Naive thymus-derived CD4-positive, alpha-beta T cell (primary cell): ENCODE measurements at regions of chr10 and their contacts with region 1.

Region 1: DNA sequence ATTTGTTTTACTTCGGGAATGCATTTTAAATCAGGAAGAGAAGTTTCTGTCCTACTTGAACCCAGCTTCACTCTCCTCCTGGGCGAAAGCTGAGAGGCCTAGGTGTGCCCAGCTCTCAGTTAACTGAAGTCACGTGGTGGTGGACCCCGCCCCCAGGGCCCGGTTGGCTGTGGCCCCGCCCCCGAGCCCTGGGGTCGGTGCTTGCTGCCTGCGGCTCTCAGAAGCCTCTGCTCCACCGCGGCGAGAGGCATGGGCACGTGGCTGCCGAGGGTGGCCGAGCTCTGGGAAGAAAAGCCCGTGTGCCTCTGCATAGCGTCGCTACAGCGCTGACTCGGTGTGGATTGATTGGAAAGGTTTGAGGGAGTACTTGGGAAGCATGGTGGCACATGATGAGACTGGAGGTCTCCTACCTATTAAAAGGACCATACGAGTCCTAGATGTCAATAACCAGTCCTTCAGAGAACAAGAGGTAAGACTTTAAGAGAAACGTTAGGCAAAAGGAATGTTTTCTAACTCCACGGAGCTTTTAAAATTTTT is 34.1 kb downstream of the NET1 start:
- DNase-seq: peak; percentile 77 to 88 (median 86)
- ATAC-seq: peak; percentile 93
- H3K4me3 ChIP-seq: peak overlapping the region; percentile 79
- H3K4me3 Mint-ChIP-seq: peak overlapping the region; percentile 92 to 100 (median 96)
- H3K27ac ChIP-seq: peak overlapping the region; percentile 78
- H3K27ac Mint-ChIP-seq: peak overlapping the region; percentile 82 to 97 (median 92)
- H3K4me1 ChIP-seq: peaks cover 0 to 24% of the 10 kb centered on the region in 2 donors
- H3K4me1 Mint-ChIP-seq: peaks cover 16 to 78% (median 62%) of the 10 kb centered on the region in 7 donors
- H3K27me3 ChIP-seq: no peaks in the 10 kb centered on the region
- H3K27me3 Mint-ChIP-seq: no peaks in the 10 kb centered on the region

Region 2: DNA sequence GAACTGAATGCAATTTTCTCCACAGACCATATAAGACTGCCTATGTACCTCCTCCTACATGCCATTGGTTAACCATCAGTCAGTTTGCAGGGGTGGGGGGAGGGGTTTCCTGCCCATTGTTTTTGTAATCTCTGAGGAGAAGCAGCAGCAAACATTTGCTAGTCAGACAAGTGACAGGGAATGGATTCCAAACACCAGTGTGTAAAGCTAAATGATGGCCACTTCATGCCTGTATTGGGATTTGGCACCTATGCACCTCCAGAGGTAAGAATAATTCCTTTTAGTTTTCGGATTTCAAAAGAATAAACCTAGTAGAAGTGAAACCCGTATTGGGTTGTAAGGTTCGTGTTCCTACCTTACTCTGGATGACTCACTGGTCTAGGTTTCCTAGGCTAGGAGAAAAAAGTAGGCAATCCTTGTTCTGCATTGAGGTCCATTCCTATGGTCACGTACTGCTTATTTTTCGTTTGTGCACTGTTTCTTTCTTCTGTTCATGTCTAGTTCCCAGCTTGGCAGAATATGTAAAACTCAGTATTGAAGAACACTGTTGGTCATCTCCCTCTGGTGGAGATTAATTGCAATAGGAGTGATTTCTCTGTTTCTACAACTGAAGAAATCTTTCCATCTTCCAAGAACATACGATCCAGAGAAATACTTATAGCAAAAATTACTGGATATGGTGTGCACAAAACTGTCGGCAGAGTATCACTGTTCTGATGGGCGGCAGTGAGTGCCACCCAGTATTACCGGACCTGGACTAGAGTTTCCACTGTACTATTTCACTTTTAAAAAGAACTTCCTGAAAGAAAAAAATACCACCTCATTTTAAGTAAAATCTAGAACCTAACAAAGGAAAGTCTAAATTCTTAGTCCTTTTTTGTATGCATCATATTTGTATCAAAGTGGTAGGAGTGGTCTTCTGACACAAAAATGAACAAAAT is 351.9 kb before region 1 on chr10 and contains the start of gene AKR1C3:
- CTCF ChIA-PET with region 1: no interaction called
- POLR2A ChIA-PET with region 1: no interaction called
- intact Hi-C with region 1: no loop called
- DNase-seq: peak in 6 of 9 donors; percentile 24 to 53 (median 36)
- ATAC-seq: peak; percentile 77
- H3K4me3 ChIP-seq: peak within 1 kb of the TSS; percentile 69
- H3K4me3 Mint-ChIP-seq: peak within 1 kb of the TSS; percentile 71 to 95 (median 91)
- H3K27ac ChIP-seq: no peak within 1 kb of the TSS
- H3K27ac Mint-ChIP-seq: peak within 1 kb of the TSS in 6 of 9 donors; percentile 35 to 90 (median 61)
- H3K4me1 ChIP-seq: no peaks in the 10 kb centered on the region
- H3K4me1 Mint-ChIP-seq: peaks cover 0 to 25% (median 15%) of the 10 kb centered on the region in 7 donors
- H3K27me3 ChIP-seq: no peaks in the 10 kb centered on the region
- H3K27me3 Mint-ChIP-seq: peaks cover 0 to 44% (median 13%) of the 10 kb centered on the region in 5 donors
- total RNA-seq, gene AKR1C3: 2.9 to 14.1 (median 5.8) TPM

Region 3: DNA sequence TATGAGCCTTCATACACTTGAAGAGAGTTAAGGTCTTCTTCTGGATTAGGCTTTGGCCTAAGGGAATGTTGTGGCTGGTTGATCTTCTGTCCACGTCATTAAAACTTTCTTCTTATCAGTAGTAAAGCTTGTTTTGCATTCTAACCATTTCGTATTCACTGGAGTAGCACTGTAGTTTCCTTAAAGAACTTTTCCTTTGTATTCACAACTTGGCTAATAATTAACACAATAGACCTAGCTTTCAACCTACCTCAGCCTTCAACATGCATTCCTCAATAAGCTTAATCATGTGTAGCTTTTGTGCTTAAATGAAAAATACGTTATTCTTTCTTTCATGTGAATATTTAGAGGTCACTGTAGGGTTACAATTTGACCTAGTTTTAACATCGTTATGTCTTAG is 304.3 kb before region 1 on chr10:
- CTCF ChIA-PET with region 1: no interaction called
- POLR2A ChIA-PET with region 1: no interaction called
- intact Hi-C with region 1: no loop called
- DNase-seq: no peak
- ATAC-seq: no peak
- H3K4me3 ChIP-seq: no peak overlapping the region
- H3K4me3 Mint-ChIP-seq: no peak overlapping the region
- H3K27ac ChIP-seq: no peak overlapping the region
- H3K27ac Mint-ChIP-seq: no peak overlapping the region
- H3K4me1 ChIP-seq: no peaks in the 10 kb centered on the region
- H3K4me1 Mint-ChIP-seq: no peaks in the 10 kb centered on the region
- H3K27me3 ChIP-seq: no peaks in the 10 kb centered on the region
- H3K27me3 Mint-ChIP-seq: peaks cover 0 to 10% (median 0%) of the 10 kb centered on the region in 5 donors

Region 4: DNA sequence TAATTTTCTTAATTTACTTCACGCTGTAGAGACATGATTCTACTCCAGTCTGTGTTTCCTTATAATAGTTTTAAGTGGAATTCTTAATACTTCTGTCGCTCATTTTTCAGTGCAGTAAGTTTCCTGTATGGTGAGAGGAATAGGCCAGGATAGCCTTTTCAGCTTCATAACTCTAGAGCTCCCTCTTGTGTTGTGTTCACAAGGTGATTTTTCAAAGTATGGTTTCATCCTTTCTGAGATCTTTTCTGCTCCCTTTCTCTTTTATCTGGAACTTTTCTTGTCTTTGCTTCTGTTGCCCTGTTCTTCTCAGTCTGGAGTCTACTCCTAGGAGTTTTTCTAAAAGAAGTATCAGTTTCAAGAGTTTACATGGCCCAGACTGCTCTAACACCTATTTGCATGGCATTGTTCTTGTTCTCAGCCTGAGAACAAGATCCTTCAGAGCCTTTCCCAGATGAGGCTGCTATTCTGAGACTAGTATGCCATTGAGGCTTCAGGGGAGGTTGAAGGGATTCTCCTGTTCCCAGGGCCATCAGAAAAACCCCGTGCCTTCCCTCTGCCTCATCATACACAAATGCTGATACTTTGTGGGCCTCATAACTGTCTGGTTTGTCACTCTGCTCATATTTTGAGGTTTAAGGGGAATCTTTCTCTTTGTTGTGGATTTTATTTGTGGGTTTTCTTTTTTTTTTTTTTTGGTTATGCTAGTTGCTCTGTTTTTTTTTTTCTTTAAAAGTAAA is 12.3 kb before region 1 on chr10:
- CTCF ChIA-PET with region 1: interaction called, 13 read pairs
- POLR2A ChIA-PET with region 1: no interaction called
- intact Hi-C with region 1: no loop called
- DNase-seq: peak in 5 of 9 donors; percentile 31 to 54 (median 38)
- ATAC-seq: peak; percentile 84
- H3K4me3 ChIP-seq: no peak overlapping the region
- H3K4me3 Mint-ChIP-seq: peak overlapping the region in 3 of 10 donors; percentile 8 to 25 (median 10)
- H3K27ac ChIP-seq: no peak overlapping the region
- H3K27ac Mint-ChIP-seq: peak overlapping the region in 4 of 9 donors; percentile 49 to 81 (median 56)
- H3K4me1 ChIP-seq: peaks cover 0 to 10% of the 10 kb centered on the region in 2 donors
- H3K4me1 Mint-ChIP-seq: peaks cover 4 to 15% (median 11%) of the 10 kb centered on the region in 7 donors
- H3K27me3 ChIP-seq: peaks cover 0 to 3% of the 10 kb centered on the region in 2 donors
- H3K27me3 Mint-ChIP-seq: no peaks in the 10 kb centered on the region

Region 5: GRCh38 chr10:5548527-5549223 is 102.2 kb after region 1 on chr10:
- CTCF ChIA-PET with region 1: interaction called, 3 read pairs
- POLR2A ChIA-PET with region 1: interaction called, 7 read pairs
- intact Hi-C with region 1: loop called in 1 of 2 experiments (anchors 1 kb)
- DNase-seq: peak in 8 of 9 donors; percentile 43 to 72 (median 52)
- ATAC-seq: peak; percentile 94
- H3K4me3 ChIP-seq: no peak overlapping the region
- H3K4me3 Mint-ChIP-seq: no peak overlapping the region
- H3K27ac ChIP-seq: no peak overlapping the region
- H3K27ac Mint-ChIP-seq: no peak overlapping the region
- H3K4me1 ChIP-seq: peaks cover 0 to 43% of the 10 kb centered on the region in 2 donors
- H3K4me1 Mint-ChIP-seq: peaks cover 0 to 41% (median 26%) of the 10 kb centered on the region in 7 donors
- H3K27me3 ChIP-seq: no peaks in the 10 kb centered on the region
- H3K27me3 Mint-ChIP-seq: peaks cover 0 to 11% (median 0%) of the 10 kb centered on the region in 5 donors

Region 6: DNA sequence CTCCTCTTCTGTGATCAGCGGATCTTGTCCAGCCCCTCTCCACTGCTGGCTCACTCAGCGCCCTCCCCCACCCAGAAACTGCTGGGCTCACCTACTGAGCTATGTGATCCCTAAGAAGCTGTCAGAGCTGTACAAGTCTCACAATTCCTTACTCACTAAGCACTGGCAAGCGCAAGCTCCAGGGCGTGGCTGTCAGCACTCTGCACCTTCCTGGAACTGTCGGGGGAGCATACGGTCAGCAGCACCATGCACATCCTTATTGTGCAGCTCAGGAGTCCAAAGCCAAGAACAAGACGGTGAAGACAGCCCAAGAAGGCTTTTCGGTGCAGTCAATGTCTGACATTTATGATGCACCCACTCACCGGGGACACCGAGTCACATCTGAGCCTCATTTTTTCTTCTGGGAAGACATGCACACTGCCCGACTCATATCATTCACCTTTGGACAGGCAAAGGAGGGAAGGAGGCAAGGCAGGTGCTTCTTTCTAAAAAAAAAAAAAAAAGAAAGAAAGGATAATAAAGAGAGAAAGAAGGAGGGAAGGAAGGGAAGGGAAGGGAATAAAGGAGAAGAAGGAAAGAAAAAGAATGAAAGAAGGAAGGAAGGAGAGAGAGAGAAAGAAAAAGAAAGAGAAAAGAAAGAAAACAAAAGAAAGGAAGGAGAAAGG is 163.6 kb after region 1 on chr10:
- CTCF ChIA-PET with region 1: interaction called, 14 read pairs
- POLR2A ChIA-PET with region 1: interaction called, 3 read pairs
- intact Hi-C with region 1: loop called in 1 of 2 experiments (anchors 1 kb)
- DNase-seq: no peak
- ATAC-seq: no peak
- H3K4me3 ChIP-seq: no peak overlapping the region
- H3K4me3 Mint-ChIP-seq: no peak overlapping the region
- H3K27ac ChIP-seq: no peak overlapping the region
- H3K27ac Mint-ChIP-seq: peak overlapping the region in 1 of 9 donors; percentile 75
- H3K4me1 ChIP-seq: no peaks in the 10 kb centered on the region
- H3K4me1 Mint-ChIP-seq: peaks cover 0 to 5% (median 0%) of the 10 kb centered on the region in 7 donors
- H3K27me3 ChIP-seq: no peaks in the 10 kb centered on the region
- H3K27me3 Mint-ChIP-seq: peaks cover 0 to 12% (median 0%) of the 10 kb centered on the region in 5 donors

Region 7: DNA sequence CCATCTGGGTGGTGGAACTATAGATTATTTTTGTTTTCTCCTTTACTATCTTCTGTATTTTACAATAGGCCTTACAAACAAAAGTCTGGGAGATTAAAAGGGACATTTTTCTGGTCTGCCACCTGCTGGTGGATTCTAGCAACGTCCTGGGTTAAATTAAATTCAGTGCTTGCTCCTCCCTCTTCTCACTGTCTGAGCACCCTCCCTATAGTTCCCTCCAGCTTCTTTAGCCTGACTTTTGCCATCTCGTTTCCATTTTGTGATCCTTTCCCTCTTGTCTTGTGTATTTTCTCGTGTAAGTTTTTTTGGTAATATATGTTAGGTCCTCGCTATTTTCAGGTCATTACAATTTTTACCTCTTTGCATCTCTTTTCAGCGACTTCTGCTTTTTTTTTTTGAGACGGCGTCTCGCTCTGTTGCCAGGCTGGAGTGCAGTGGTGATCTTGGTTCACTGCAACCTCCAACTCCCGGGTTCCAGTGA is 427.1 kb after region 1 on chr10:
- CTCF ChIA-PET with region 1: interaction called, 3 read pairs
- POLR2A ChIA-PET with region 1: no interaction called
- intact Hi-C with region 1: loop called (anchors 1 kb)
- DNase-seq: peak; percentile 42 to 76 (median 67)
- ATAC-seq: peak; percentile 96
- H3K4me3 ChIP-seq: no peak overlapping the region
- H3K4me3 Mint-ChIP-seq: peak overlapping the region in 8 of 10 donors; percentile 46 to 76 (median 58)
- H3K27ac ChIP-seq: no peak overlapping the region
- H3K27ac Mint-ChIP-seq: peak overlapping the region in 2 of 9 donors; percentile 60 to 74
- H3K4me1 ChIP-seq: no peaks in the 10 kb centered on the region
- H3K4me1 Mint-ChIP-seq: peaks cover 2 to 10% (median 5%) of the 10 kb centered on the region in 7 donors
- H3K27me3 ChIP-seq: no peaks in the 10 kb centered on the region
- H3K27me3 Mint-ChIP-seq: peaks cover 0 to 4% (median 0%) of the 10 kb centered on the region in 5 donors

Region 8: DNA sequence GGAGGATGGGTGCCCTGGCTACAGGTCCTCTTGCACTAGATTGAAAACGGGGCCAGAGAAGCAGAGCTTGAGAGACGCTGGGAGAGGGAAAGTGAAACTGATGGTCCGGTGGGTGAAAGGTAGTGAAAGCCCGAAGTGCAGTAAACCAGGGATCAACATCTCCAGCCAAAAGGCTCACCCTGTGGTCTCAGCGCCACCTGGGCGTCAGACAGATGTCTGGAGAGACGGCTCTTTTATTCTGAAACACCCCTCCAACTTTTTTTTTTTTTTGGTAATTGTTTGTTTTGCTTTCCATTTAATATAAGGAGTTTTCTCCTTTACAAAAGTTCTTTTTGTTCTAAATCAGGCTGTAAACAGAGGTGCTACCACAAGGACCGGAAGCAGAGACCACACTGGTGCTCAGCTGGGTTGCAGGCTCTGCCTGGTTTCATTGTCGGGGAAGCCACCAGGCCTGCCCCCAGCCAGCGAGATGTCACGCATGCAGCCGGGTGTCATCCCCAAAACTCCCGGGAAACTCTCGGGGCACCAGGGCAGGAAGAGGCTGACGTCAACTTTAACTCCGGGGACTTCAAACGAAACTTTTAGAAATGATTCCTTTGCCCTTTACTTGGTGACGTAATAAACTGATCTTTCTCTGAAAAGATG is 604.5 kb after region 1 on chr10:
- CTCF ChIA-PET with region 1: no interaction called
- POLR2A ChIA-PET with region 1: no interaction called
- intact Hi-C with region 1: loop called in 1 of 2 experiments (anchors 2 kb)
- DNase-seq: peak; percentile 62 to 98 (median 90)
- ATAC-seq: peak; percentile 92
- H3K4me3 ChIP-seq: peak overlapping the region; percentile 49
- H3K4me3 Mint-ChIP-seq: peak overlapping the region; percentile 78 to 98 (median 92)
- H3K27ac ChIP-seq: peak overlapping the region; percentile 79
- H3K27ac Mint-ChIP-seq: peak overlapping the region; percentile 94 to 99 (median 97)
- H3K4me1 ChIP-seq: peaks cover 52 to 54% of the 10 kb centered on the region in 2 donors
- H3K4me1 Mint-ChIP-seq: peaks cover 54 to 90% (median 85%) of the 10 kb centered on the region in 7 donors
- H3K27me3 ChIP-seq: no peaks in the 10 kb centered on the region
- H3K27me3 Mint-ChIP-seq: no peaks in the 10 kb centered on the region